ENCODE measurements at regions of chrX and their contacts with region 1.

Region 1: GRCh38 chrX:25144043-25144940 is 128.5 kb upstream of the ARX start:
- DNase-seq: peak; percentile 10
- H3K4me3 ChIP-seq: no peak overlapping the region
- H3K27ac ChIP-seq: no peak overlapping the region
- H3K27me3 ChIP-seq: no peaks in the 10 kb centered on the region
- CTCF ChIP-seq: peak; percentile 68

Region 2: GRCh38 chrX:25034889-25035288 is 109.4 kb before region 1 on chrX:
- CTCF ChIA-PET with region 1: interaction called, 11 read pairs
- POLR2A ChIA-PET with region 1: no interaction called
- DNase-seq: no peak
- H3K4me3 ChIP-seq: no peak overlapping the region
- H3K27ac ChIP-seq: no peak overlapping the region
- H3K27me3 ChIP-seq: no peaks in the 10 kb centered on the region
- CTCF ChIP-seq: peak; percentile 24

Region 3: GRCh38 chrX:25166546-25166945 is 22.3 kb after region 1 on chrX:
- CTCF ChIA-PET with region 1: no interaction called
- POLR2A ChIA-PET with region 1: no interaction called
- DNase-seq: no peak
- H3K4me3 ChIP-seq: no peak overlapping the region
- H3K27ac ChIP-seq: no peak overlapping the region
- H3K27me3 ChIP-seq: no peaks in the 10 kb centered on the region
- CTCF ChIP-seq: no peak